ENCODE measurements at regions of chr12 and their contacts with region 1.

Region 1: DNA sequence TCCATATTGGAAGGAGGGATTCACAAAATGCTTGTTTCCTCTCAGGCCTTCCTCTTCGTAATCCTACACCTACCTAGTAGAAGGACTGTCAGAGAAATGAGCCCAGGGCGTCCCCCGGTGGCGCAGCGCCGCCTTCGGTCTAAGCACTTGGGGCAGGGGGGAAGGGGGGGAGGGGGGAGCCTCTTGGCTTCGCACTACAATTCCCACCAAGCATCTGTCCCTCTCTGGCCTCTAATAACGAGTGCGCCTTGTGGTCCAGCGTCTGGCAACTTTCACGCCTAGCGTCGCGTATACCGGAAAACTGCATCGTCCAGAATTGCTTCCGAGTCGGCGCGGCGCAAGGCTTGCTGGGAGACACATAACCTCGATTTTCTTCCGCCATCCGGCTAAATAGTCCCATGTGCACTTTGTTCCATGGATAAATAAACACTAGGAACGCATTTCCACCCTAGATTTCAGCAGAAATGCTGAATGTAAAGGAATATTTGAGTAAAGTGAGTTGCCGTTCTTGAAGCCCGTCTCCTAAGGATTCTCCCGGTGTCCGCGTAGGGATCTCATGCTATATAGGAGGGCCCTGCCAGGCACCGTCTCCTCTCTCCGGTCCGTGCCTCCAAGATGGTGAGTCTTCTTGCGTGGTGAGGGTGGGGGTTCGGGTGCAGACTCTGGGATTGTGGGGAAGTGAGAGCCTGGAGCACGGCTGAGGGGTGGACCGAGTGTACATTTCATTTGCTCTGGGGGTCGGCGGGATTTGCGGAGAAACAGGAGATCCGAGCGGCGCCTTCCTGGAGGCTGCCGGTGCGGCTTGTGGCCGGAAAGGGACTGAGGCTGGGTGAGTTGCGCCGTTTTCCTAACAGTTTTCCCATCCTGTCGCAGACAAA is at the start of gene RPS26:
- DNase-seq: peak; percentile 93 to 98 (median 98)
- H3K4me3 ChIP-seq: peak within 1 kb of the TSS; percentile 78 to 95 (median 92)
- H3K4me3 Mint-ChIP-seq: peak within 1 kb of the TSS; percentile 95 to 98
- H3K27ac ChIP-seq: peak within 1 kb of the TSS; percentile 79 to 97
- H3K27ac Mint-ChIP-seq: peak within 1 kb of the TSS; percentile 93 to 99 (median 96)
- H3K4me1 ChIP-seq: peaks cover 14 to 18% of the 10 kb centered on the region in 2 donors
- H3K4me1 Mint-ChIP-seq: peaks cover 14% of the 10 kb centered on the region
- H3K27me3 ChIP-seq: no peaks in the 10 kb centered on the region
- H3K27me3 Mint-ChIP-seq: no peaks in the 10 kb centered on the region
- CTCF ChIP-seq: peak; percentile 51
- polyA plus RNA-seq, gene RPS26: 238 to 363 (median 286) TPM

Region 2: DNA sequence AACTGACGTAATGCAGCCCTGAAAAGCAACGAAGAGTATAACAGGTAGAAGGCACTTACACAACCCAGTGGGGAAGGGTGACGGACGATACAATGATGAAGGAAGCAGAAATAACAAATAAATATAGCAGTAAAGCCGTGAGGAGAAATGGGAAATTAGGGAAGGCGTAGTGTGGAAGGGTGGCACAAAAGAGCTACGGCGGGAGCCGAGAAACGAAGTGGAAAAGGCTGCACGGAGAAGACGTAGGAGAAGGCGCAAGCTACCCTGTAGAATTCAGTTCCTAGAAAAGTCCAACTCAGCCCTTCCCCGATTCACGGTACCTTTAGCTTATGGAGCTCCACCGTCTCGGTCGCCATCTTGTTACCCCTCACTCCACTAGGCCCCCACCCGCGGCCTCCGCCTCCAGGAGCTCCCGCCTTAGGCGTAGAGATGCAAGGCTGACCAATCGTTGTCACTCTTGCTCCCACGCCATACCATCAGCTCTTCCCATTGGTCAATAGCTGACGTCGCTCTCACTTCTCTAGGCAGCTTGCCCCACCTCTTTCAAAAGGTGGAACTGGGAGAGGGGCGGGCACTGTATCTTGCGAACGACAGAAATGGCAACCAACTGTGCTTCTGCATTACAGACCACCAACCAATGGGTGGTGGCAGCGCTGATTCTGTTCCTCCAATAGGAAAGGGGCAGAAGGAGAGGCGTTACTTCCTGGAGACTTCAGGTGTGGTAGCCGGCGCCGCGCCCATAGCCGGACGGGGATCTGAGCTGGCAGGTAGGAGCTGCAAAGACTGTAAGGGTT is 224.2 kb before region 1 on chr12 and contains the starts of genes ORMDL2 and SARNP:
- intact Hi-C with region 1: loop called in 1 of 2 experiments (anchors 5 kb)
- DNase-seq: peak; percentile 99 to 100 (median 100)
- H3K4me3 ChIP-seq: peak within 1 kb of the TSS; percentile 78 to 100 (median 99)
- H3K4me3 Mint-ChIP-seq: no peak within 1 kb of the TSS
- H3K27ac ChIP-seq: peak within 1 kb of the TSS; percentile 53 to 97
- H3K27ac Mint-ChIP-seq: no peak within 1 kb of the TSS
- H3K4me1 ChIP-seq: peaks cover 19 to 32% of the 10 kb centered on the region in 2 donors
- H3K4me1 Mint-ChIP-seq: peaks cover 23% of the 10 kb centered on the region
- H3K27me3 ChIP-seq: no peaks in the 10 kb centered on the region
- H3K27me3 Mint-ChIP-seq: no peaks in the 10 kb centered on the region
- CTCF ChIP-seq: no peak
- polyA plus RNA-seq, gene ORMDL2: 15.5 to 140 (median 137) TPM
- polyA plus RNA-seq, gene SARNP: 28.9 to 139 (median 98.6) TPM

Region 3: DNA sequence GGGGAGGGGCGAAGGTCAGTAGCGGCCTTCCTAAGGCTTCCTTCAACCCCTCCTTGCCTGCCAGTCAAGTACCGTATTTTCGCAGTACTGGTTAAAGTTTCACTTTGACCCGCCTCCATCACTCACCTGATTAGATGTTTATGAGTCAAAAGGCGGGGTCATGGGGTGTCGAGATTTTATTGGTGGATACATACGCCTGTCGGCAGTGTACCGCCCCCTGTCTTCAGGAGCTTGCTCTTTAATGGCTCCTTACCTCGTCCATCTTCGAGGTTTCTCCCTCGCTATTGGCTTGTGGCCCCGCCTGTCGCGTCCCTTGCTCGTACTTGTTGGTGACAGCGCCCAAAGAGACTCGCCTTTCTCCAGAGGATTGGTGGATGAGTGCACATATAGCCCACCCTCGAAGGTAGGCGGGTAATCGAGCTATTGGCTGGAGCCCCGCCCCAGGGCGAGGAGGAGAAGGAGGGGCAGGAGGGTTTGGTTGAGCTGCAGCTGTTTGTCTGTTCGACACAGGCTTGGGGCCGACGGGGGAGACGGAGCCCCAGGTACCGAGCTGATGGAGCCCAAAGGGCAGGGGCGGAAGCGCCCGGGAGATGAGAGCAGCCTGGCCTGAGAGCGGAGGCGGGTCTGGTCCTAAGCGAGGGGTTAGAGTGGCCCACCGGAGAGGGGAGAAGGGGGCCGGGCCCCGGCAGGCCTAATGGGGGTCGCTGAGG is 68.0 kb before region 1 on chr12 and contains the start of gene RAB5B:
- intact Hi-C with region 1: loop called in 1 of 2 experiments (anchors 2 kb)
- DNase-seq: peak; percentile 99 to 100 (median 100)
- H3K4me3 ChIP-seq: peak within 1 kb of the TSS; percentile 82 to 98 (median 92)
- H3K4me3 Mint-ChIP-seq: no peak within 1 kb of the TSS
- H3K27ac ChIP-seq: peak within 1 kb of the TSS; percentile 83 to 90
- H3K27ac Mint-ChIP-seq: no peak within 1 kb of the TSS
- H3K4me1 ChIP-seq: peaks cover 26 to 42% of the 10 kb centered on the region in 2 donors
- H3K4me1 Mint-ChIP-seq: peaks cover 24% of the 10 kb centered on the region
- H3K27me3 ChIP-seq: no peaks in the 10 kb centered on the region
- H3K27me3 Mint-ChIP-seq: peaks cover 0 to 2% (median 0%) of the 10 kb centered on the region in 3 donors
- CTCF ChIP-seq: no peak
- polyA plus RNA-seq, gene RAB5B: 44.0 to 63.0 (median 48.5) TPM

Region 4: GRCh38 chr12:56104109-56104814 is 62.5 kb after region 1 on chr12 and contains the start of gene PA2G4:
- intact Hi-C with region 1: loop called in 1 of 2 experiments (anchors 5 kb)
- DNase-seq: peak; percentile 92 to 96 (median 95)
- H3K4me3 ChIP-seq: peak within 1 kb of the TSS; percentile 69 to 85 (median 83)
- H3K4me3 Mint-ChIP-seq: peak within 1 kb of the TSS; percentile 99
- H3K27ac ChIP-seq: peak within 1 kb of the TSS; percentile 43 to 77
- H3K27ac Mint-ChIP-seq: peak within 1 kb of the TSS; percentile 78 to 96 (median 93)
- H3K4me1 ChIP-seq: peaks cover 19 to 23% of the 10 kb centered on the region in 2 donors
- H3K4me1 Mint-ChIP-seq: peaks cover 23% of the 10 kb centered on the region
- H3K27me3 ChIP-seq: no peaks in the 10 kb centered on the region
- H3K27me3 Mint-ChIP-seq: peaks cover 0 to 5% (median 2%) of the 10 kb centered on the region in 3 donors
- CTCF ChIP-seq: no peak
- polyA plus RNA-seq, gene PA2G4: 83.0 to 84.2 (median 83.0) TPM

Region 5: GRCh38 chr12:56127888-56128669 is 86.3 kb after region 1 on chr12 and contains the start of gene ESYT1:
- intact Hi-C with region 1: no loop called
- DNase-seq: peak; percentile 99
- H3K4me3 ChIP-seq: peak within 1 kb of the TSS; percentile 60 to 99 (median 94)
- H3K4me3 Mint-ChIP-seq: peak within 1 kb of the TSS; percentile 95 to 98
- H3K27ac ChIP-seq: peak within 1 kb of the TSS; percentile 54 to 78
- H3K27ac Mint-ChIP-seq: peak within 1 kb of the TSS; percentile 84 to 94 (median 93)
- H3K4me1 ChIP-seq: peaks cover 55 to 68% of the 10 kb centered on the region in 2 donors
- H3K4me1 Mint-ChIP-seq: peaks cover 59% of the 10 kb centered on the region
- H3K27me3 ChIP-seq: no peaks in the 10 kb centered on the region
- H3K27me3 Mint-ChIP-seq: peaks cover 0 to 6% (median 1%) of the 10 kb centered on the region in 3 donors
- CTCF ChIP-seq: no peak
- polyA plus RNA-seq, gene ESYT1: 74.2 to 81.1 (median 74.6) TPM

Measured in CD14-positive monocyte (primary cell).